ENCODE measurements at regions of chr2 and their contacts with region 1.

Region 1: DNA sequence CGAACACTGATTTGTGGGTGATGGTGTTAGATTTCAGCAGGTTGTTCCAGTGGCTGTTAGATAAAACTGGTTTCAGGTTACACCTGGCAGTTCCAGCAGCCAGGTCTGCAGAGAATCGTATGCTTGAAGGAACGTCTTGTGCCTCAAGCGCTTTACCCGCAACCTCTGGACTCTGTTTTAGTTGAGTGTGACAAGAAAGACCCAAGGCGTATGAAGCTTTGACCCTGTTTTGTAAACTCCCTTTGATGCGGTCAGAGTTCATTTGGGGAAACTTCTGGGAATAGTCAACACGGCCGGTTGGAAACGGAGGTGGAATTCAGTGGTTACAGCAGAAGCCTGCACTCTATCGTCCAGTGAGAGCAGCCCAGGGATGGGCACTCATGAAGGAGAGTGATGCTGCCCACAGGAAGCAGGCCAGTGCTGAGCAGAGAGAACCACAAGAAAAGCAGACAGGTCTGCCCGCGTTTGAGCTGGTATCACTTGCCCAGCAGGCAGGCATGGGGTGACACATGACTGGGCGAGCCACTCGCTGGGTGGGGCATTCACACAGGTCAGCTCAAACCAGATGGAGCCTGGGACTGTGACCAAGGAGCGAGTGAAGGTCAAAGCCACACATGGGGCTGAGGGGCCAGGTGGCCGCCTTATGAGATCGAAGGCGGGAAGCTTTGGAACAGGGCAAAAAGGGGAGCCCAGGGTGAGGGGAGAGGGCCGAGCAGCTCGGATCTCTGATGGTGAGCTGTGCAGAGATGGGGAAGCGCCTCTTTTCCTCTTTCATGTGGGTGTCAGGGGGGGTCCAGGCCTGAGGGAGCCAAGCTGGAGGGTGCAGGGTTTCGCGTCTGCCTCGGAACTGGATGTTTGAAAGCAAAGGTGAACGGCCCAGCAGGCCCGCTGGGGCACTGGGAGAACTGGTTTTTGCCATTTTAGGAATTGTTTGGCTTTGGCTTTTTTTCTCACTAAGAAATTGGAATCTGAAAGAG is 99.7 kb upstream of the MBOAT2 start:
- DNase-seq: peak; percentile 79
- ATAC-seq: peak; percentile 82
- H3K4me3 ChIP-seq: peak overlapping the region; percentile 26
- H3K27ac ChIP-seq: peak overlapping the region; percentile 99
- H3K4me1 ChIP-seq: peaks cover 49% of the 10 kb centered on the region
- H3K27me3 ChIP-seq: no peaks in the 10 kb centered on the region
- CTCF ChIP-seq: no peak; the same call in 1 of the 2 replicates

Region 2: DNA sequence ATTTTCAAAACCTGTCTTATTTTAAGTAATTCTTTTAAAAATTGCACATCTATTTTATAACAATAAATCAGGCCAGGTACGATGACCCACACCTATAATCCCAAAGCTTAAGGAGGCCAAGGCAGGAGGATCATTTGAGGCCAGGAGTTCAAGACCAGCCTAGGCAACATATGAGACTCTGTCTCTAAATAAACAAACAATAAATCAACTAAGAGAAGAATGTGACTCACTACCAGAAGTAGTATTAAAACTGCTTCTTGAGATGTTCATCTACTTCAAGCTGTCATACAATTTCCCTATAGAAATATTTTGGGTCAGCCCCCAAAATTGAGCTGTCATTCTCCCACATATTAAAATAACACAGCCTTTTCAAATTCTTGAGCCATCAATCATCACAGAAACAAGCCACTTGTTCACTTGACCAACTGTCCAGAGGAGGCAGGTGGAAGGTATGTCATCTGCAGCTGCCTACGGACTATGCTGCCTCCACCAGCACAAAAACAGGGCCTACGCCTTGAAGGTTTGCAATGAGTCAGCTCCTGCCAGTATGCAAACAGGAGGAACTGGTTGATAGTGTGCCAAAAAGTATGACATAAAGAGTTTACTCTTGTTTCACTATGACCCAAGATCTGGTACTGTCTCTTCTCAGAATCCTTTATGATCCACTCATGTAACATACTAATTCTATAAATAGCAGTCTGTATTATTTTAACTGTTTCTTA is 299.3 kb before region 1 on chr2:
- CTCF ChIA-PET with region 1: no interaction called
- POLR2A ChIA-PET with region 1: no interaction called
- intact Hi-C with region 1: no loop called
- DNase-seq: peak; percentile 99
- ATAC-seq: peak; percentile 100
- H3K4me3 ChIP-seq: no peak overlapping the region
- H3K27ac ChIP-seq: peak overlapping the region; percentile 63
- H3K4me1 ChIP-seq: peaks cover 23% of the 10 kb centered on the region
- H3K27me3 ChIP-seq: no peaks in the 10 kb centered on the region
- CTCF ChIP-seq: no peak; the same call in 1 of the 2 replicates

Region 3: GRCh38 chr2:9092383-9093282 is 10.5 kb before region 1 on chr2:
- CTCF ChIA-PET with region 1: no interaction called
- POLR2A ChIA-PET with region 1: interaction called, 28 read pairs
- intact Hi-C with region 1: no loop called
- DNase-seq: no peak
- ATAC-seq: no peak
- H3K4me3 ChIP-seq: no peak overlapping the region
- H3K27ac ChIP-seq: no peak overlapping the region
- H3K4me1 ChIP-seq: peaks cover 17% of the 10 kb centered on the region
- H3K27me3 ChIP-seq: no peaks in the 10 kb centered on the region
- CTCF ChIP-seq: no peak

Region 4: GRCh38 chr2:10900216-10901109 is 1797.3 kb after region 1 on chr2:
- CTCF ChIA-PET with region 1: no interaction called
- POLR2A ChIA-PET with region 1: no interaction called
- intact Hi-C with region 1: no loop called
- DNase-seq: peak; percentile 74
- ATAC-seq: peak; percentile 83
- H3K4me3 ChIP-seq: no peak overlapping the region
- H3K27ac ChIP-seq: peak overlapping the region; percentile 3; the same call in 1 of the 2 replicates
- H3K4me1 ChIP-seq: peaks cover 15% of the 10 kb centered on the region
- H3K27me3 ChIP-seq: no peaks in the 10 kb centered on the region
- CTCF ChIP-seq: peak; percentile 72

Measured in PC-3 (cell line).